ENCODE measurements at regions of chr19 and their contacts with region 1.

Region 1: DNA sequence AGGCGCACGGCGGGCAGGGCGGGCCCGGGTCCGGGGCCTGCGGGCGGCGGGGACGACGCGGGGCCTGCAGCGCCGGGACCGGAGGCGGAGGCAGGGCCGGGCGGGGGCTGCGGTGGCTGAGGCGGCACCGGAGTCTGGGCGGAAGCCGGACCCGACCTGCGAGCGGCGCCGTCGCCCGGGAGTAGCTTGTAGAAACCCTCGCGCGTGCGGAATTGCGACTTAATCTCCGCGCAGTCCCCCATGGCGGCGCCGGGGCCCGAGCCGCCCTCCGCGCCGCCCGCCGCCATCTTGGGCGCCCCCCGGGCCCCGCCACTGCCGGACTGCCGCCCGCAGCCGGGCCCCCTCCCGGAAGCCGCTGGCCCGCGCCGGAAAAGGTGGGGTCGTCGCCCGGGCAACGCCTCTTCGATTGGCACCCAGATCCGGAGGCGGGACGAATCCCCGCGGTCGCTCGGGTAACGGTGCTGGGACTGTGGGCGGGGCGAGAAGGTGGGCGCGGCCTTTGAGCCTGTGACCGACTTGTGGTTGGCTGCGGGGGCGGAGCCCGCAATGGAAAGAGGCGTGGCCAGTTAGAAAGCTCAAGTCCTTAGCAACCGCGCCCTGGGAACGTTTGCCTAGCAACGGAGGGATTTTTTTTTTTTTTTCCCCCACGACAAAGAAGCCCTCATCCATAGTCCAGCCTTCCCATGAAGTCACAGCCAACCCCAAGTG is at the start of gene DMWD:
- DNase-seq: peak; percentile 99
- ATAC-seq: peak; percentile 97
- H3K4me3 ChIP-seq: peak within 1 kb of the TSS; percentile 40 to 73 (median 59)
- H3K4me3 Mint-ChIP-seq: peak within 1 kb of the TSS; percentile 93
- H3K27ac ChIP-seq: peak within 1 kb of the TSS; percentile 22 to 76
- H3K27ac Mint-ChIP-seq: peak within 1 kb of the TSS; percentile 92
- H3K4me1 ChIP-seq: peaks cover 24 to 29% of the 10 kb centered on the region in 2 donors
- H3K4me1 Mint-ChIP-seq: peaks cover 30% of the 10 kb centered on the region
- H3K27me3 ChIP-seq: no peaks in the 10 kb centered on the region
- H3K27me3 Mint-ChIP-seq: peaks cover 8% of the 10 kb centered on the region
- CTCF ChIP-seq: no peak
- total RNA-seq, gene DMWD: 86.4 and 91.2 TPM in 2 replicates

Region 2: GRCh38 chr19:45506246-45506990 is 286.2 kb before region 1 on chr19:
- CTCF ChIA-PET with region 1: no interaction called
- POLR2A ChIA-PET with region 1: no interaction called
- intact Hi-C with region 1: loop called (anchors 2 kb)
- DNase-seq: peak; percentile 98
- ATAC-seq: peak; percentile 74
- H3K4me3 ChIP-seq: peak overlapping the region; percentile 63 to 96 (median 84)
- H3K4me3 Mint-ChIP-seq: peak overlapping the region; percentile 94
- H3K27ac ChIP-seq: peak overlapping the region; percentile 83 to 87
- H3K27ac Mint-ChIP-seq: peak overlapping the region; percentile 94
- H3K4me1 ChIP-seq: peaks cover 26 to 43% of the 10 kb centered on the region in 2 donors
- H3K4me1 Mint-ChIP-seq: peaks cover 54% of the 10 kb centered on the region
- H3K27me3 ChIP-seq: no peaks in the 10 kb centered on the region
- H3K27me3 Mint-ChIP-seq: no peaks in the 10 kb centered on the region
- CTCF ChIP-seq: peak; percentile 63

Region 3: GRCh38 chr19:45523642-45524256 is 268.9 kb before region 1 on chr19:
- CTCF ChIA-PET with region 1: no interaction called
- POLR2A ChIA-PET with region 1: no interaction called
- intact Hi-C with region 1: no loop called
- DNase-seq: peak; percentile 91
- ATAC-seq: peak; percentile 99
- H3K4me3 ChIP-seq: no peak overlapping the region
- H3K4me3 Mint-ChIP-seq: no peak overlapping the region
- H3K27ac ChIP-seq: peak overlapping the region in 1 of 2 donors; percentile 39
- H3K27ac Mint-ChIP-seq: peak overlapping the region; percentile 85
- H3K4me1 ChIP-seq: peaks cover 8 to 16% of the 10 kb centered on the region in 2 donors
- H3K4me1 Mint-ChIP-seq: peaks cover 23% of the 10 kb centered on the region
- H3K27me3 ChIP-seq: no peaks in the 10 kb centered on the region
- H3K27me3 Mint-ChIP-seq: no peaks in the 10 kb centered on the region
- CTCF ChIP-seq: peak; percentile 89

Region 4: DNA sequence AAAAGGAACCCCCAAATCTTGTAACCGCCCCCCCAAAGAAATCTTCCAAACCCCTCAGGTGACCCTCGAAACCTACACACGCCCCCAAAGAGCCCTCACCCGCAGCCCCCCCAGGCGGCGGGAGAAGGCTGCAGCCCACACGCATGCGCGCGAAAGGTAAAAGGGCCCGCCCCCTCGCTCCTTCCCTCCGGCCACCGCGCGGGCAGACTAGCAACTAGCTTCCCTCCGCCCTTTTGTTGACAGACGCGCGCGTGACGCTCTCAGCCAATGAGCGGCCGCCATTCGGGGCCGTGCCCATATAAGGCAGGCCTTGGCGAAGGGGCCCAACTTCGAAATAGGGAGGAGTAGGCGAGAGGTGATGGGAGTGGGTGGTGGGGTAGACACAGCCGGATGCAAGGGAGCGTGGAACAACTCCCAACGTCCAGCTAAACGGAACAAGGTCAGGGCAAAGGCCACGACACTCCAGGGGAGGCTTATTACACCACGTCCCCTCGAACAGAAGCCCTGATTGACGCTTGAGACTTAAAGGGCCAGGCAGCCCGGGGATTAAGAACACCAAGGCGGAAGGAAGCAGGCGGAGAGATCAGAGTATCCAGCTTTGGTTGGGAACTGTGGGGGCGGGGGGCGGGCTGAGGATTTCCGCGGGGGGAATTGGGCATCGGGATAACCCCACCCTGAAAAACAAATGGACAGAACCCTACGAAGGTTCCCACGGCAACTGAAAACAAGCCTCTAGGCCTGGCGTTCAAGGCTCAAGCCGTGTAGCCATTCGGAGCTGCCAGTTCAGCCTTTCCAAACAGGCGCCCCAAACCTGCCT is 75.2 kb before region 1 on chr19:
- CTCF ChIA-PET with region 1: no interaction called
- POLR2A ChIA-PET with region 1: interaction called, 4 read pairs
- intact Hi-C with region 1: loop called (anchors 5 kb)
- DNase-seq: peak; percentile 97
- ATAC-seq: peak; percentile 95
- H3K4me3 ChIP-seq: peak overlapping the region; percentile 76 to 93 (median 82)
- H3K4me3 Mint-ChIP-seq: peak overlapping the region; percentile 91
- H3K27ac ChIP-seq: peak overlapping the region; percentile 76 to 94
- H3K27ac Mint-ChIP-seq: peak overlapping the region; percentile 97
- H3K4me1 ChIP-seq: peaks cover 18 to 25% of the 10 kb centered on the region in 2 donors
- H3K4me1 Mint-ChIP-seq: peaks cover 39% of the 10 kb centered on the region
- H3K27me3 ChIP-seq: no peaks in the 10 kb centered on the region
- H3K27me3 Mint-ChIP-seq: no peaks in the 10 kb centered on the region
- CTCF ChIP-seq: no peak

Region 5: DNA sequence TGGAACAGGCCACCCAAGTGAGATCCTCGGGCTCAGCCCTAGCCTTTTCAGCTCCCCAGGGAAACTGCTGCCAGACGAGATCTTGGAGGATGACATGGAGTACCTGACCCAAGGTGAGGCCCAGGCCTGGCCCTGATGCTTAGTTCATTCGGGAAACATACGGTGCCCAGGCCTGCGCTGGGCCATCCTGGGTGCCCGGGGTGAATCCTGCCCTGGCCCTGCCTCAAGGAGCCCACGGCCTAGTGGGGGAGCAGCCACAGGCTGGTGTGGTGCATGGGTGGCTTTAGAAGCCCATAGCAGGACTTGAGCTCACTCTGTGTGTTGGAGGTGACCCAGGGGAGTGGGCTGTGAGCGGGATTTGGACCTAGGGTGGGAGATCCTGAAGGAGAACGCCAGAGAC is 33.7 kb before region 1 on chr19:
- CTCF ChIA-PET with region 1: no interaction called
- POLR2A ChIA-PET with region 1: no interaction called
- intact Hi-C with region 1: no loop called
- DNase-seq: no peak
- ATAC-seq: no peak
- H3K4me3 ChIP-seq: no peak overlapping the region
- H3K4me3 Mint-ChIP-seq: no peak overlapping the region
- H3K27ac ChIP-seq: no peak overlapping the region
- H3K27ac Mint-ChIP-seq: no peak overlapping the region
- H3K4me1 ChIP-seq: no peaks in the 10 kb centered on the region
- H3K4me1 Mint-ChIP-seq: no peaks in the 10 kb centered on the region
- H3K27me3 ChIP-seq: peaks cover 0 to 9% (median 0%) of the 10 kb centered on the region in 4 experiments
- H3K27me3 Mint-ChIP-seq: peaks cover 13% of the 10 kb centered on the region
- CTCF ChIP-seq: no peak

Region 6: GRCh38 chr19:45770192-45771101 is 22.2 kb before region 1 on chr19:
- CTCF ChIA-PET with region 1: interaction called, 302 read pairs
- POLR2A ChIA-PET with region 1: interaction called, 18 read pairs
- intact Hi-C with region 1: loop called (anchors 1 kb)
- DNase-seq: peak; percentile 95
- ATAC-seq: peak; percentile 68
- H3K4me3 ChIP-seq: peak overlapping the region in 4 of 5 experiments; percentile 71 to 88 (median 82)
- H3K4me3 Mint-ChIP-seq: peak overlapping the region; percentile 90
- H3K27ac ChIP-seq: peak overlapping the region; percentile 29 to 56
- H3K27ac Mint-ChIP-seq: peak overlapping the region; percentile 86
- H3K4me1 ChIP-seq: peaks cover 12 to 32% of the 10 kb centered on the region in 2 donors
- H3K4me1 Mint-ChIP-seq: peaks cover 29% of the 10 kb centered on the region
- H3K27me3 ChIP-seq: peaks cover 0 to 28% (median 8%) of the 10 kb centered on the region in 4 experiments
- H3K27me3 Mint-ChIP-seq: no peaks in the 10 kb centered on the region
- CTCF ChIP-seq: peak; percentile 96

Region 7: GRCh38 chr19:45817010-45817724 is 24.5 kb after region 1 on chr19:
- CTCF ChIA-PET with region 1: interaction called, 9 read pairs
- POLR2A ChIA-PET with region 1: no interaction called
- intact Hi-C with region 1: loop called (anchors 2 kb)
- DNase-seq: peak; percentile 96
- ATAC-seq: peak; percentile 100
- H3K4me3 ChIP-seq: no peak overlapping the region
- H3K4me3 Mint-ChIP-seq: peak overlapping the region; percentile 54
- H3K27ac ChIP-seq: no peak overlapping the region
- H3K27ac Mint-ChIP-seq: peak overlapping the region; percentile 75
- H3K4me1 ChIP-seq: peaks cover 19 to 23% of the 10 kb centered on the region in 2 donors
- H3K4me1 Mint-ChIP-seq: peaks cover 11% of the 10 kb centered on the region
- H3K27me3 ChIP-seq: peaks cover 0 to 6% (median 2%) of the 10 kb centered on the region in 4 experiments
- H3K27me3 Mint-ChIP-seq: peaks cover 3% of the 10 kb centered on the region
- CTCF ChIP-seq: peak; percentile 97

Measured in B cell (primary cell).